Sigmoid colon (tissue), 7 donors: ENCODE measurements at regions of chr16 and their contacts with region 1.

Region 1: DNA sequence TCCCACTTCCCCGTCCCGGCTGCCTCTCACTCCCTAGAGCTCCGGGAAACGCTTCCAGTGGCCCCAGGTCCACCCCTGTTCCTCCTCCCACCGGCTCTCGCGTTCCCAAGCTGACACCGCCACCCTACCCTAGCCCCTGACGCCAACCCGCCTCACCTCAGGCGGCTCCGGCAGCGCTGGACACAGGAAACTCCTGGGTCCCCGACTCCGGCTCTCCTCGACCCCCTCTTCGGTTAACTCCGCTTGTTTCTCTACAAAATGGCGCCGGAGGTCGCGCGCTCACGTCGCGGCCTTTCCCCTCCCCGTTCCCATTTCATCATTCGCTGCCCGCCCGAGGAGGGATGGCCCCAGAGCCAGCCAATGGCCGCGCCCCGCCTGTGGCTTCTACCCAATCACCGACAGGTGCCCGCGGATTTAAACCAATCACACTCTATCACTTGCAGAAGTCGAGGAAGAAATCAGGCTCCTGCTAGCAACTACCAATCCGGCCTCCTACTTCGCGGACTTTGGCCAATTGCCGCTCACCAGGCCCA is at the start of gene CNOT1:
- DNase-seq: peak; percentile 99
- H3K4me3 ChIP-seq: peak within 1 kb of the TSS; percentile 86 to 99 (median 96)
- H3K27ac ChIP-seq: peak within 1 kb of the TSS; percentile 97 to 100 (median 98)
- H3K4me1 ChIP-seq: peaks cover 0 to 25% (median 23%) of the 10 kb centered on the region in 4 donors
- H3K27me3 ChIP-seq: no peaks in the 10 kb centered on the region
- CTCF ChIP-seq: no peak
- EP300 ChIP-seq: no peak
- POLR2A ChIP-seq: peak; percentile 76 to 81
- total RNA-seq, gene CNOT1: 70.1 to 112 (median 84.2) TPM

Region 2: DNA sequence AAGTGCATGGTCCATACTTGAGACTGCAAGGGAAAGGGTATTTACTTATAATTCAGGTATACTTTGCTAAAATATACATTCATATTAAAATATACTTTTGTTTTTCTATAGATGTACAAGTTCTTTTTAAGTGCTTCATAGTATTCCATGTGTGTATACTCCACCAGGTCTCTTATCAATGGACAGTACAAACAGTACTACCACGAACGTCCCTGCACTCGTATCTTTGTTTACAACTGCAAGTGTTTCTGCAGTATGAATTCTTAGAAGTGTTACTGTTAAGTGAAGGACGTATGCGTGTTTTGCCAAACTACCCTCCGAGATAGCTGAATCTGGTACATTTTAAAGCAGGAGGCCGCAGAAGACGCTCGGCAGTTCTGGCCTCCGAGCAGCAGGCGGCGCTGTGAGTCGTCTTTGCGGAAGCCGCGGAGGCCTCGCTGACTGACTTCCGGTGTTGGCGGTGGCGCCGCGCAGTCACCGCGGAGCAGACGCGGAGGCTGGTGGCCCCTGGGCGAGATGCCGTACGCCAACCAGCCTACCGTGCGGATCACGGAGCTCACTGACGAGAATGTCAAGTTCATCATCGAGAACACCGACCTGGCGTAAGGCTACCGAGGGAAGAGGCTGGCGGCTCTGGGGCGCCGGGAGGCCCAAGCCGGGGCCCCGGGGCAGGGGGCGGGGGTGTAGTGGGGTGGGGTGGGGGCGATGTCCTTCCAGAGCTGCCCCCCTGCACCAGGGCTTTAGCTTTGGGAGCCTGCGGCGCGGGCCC is 1167.2 kb before region 1 on chr16 and contains the start of gene POLR2C:
- intact Hi-C with region 1: loop called (anchors 10 kb)
- DNase-seq: peak; percentile 93
- H3K4me3 ChIP-seq: peak within 1 kb of the TSS; percentile 93 to 99 (median 98)
- H3K27ac ChIP-seq: peak within 1 kb of the TSS; percentile 87 to 92 (median 90)
- H3K4me1 ChIP-seq: peaks cover 0 to 25% (median 21%) of the 10 kb centered on the region in 4 donors
- H3K27me3 ChIP-seq: no peaks in the 10 kb centered on the region
- CTCF ChIP-seq: peak; percentile 86 to 95 (median 94)
- EP300 ChIP-seq: no peak
- POLR2A ChIP-seq: peak; percentile 88 to 94
- total RNA-seq, gene POLR2C: 60.7 to 141 (median 101) TPM

Region 3: GRCh38 chr16:58212824-58213655 is 416.6 kb before region 1 on chr16:
- intact Hi-C with region 1: no loop called
- DNase-seq: no peak
- H3K4me3 ChIP-seq: no peak overlapping the region
- H3K27ac ChIP-seq: no peak overlapping the region
- H3K4me1 ChIP-seq: no peaks in the 10 kb centered on the region
- H3K27me3 ChIP-seq: no peaks in the 10 kb centered on the region
- CTCF ChIP-seq: no peak
- EP300 ChIP-seq: no peak
- POLR2A ChIP-seq: no peak

Region 4: DNA sequence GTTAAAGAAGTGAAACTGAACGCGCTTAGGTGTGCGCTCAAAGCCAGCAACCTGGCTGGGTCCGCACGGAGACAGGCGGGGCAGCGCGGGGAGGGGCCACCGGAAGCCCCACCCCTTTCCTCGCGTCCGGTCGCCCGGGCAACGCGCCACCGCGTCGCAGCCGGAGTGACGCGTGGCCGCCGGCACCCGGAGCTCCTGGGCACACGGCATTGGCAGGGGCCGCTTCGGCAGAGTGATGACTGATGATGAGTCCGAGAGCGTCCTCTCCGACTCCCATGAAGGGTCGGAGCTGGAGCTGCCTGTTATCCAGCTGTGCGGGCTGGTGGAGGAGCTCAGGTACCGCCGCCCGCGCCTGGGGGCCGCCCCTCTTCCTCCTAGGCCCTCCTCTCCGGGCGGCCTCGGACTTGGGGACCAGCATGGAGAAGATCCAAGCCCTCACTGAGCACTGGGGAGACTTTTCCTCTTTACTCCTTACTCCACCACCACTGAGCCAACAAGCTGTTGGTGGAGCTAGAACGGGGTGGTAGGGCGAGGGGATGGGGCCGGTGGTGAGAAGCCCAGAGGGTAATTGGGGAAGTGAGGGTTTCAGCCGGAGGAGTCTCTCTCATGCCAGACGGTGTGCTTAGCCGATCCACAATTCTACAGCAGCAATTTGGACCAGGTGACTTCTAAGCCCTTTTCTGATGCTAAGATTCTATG is 379.7 kb before region 1 on chr16:
- intact Hi-C with region 1: loop called (anchors 5 kb)
- DNase-seq: peak; percentile 82
- H3K4me3 ChIP-seq: peak overlapping the region; percentile 46 to 70 (median 58)
- H3K27ac ChIP-seq: peak overlapping the region; percentile 39 to 67 (median 62)
- H3K4me1 ChIP-seq: peaks cover 0 to 16% (median 6%) of the 10 kb centered on the region in 4 donors
- H3K27me3 ChIP-seq: no peaks in the 10 kb centered on the region
- CTCF ChIP-seq: no peak
- EP300 ChIP-seq: no peak
- POLR2A ChIP-seq: no peak

Region 5: DNA sequence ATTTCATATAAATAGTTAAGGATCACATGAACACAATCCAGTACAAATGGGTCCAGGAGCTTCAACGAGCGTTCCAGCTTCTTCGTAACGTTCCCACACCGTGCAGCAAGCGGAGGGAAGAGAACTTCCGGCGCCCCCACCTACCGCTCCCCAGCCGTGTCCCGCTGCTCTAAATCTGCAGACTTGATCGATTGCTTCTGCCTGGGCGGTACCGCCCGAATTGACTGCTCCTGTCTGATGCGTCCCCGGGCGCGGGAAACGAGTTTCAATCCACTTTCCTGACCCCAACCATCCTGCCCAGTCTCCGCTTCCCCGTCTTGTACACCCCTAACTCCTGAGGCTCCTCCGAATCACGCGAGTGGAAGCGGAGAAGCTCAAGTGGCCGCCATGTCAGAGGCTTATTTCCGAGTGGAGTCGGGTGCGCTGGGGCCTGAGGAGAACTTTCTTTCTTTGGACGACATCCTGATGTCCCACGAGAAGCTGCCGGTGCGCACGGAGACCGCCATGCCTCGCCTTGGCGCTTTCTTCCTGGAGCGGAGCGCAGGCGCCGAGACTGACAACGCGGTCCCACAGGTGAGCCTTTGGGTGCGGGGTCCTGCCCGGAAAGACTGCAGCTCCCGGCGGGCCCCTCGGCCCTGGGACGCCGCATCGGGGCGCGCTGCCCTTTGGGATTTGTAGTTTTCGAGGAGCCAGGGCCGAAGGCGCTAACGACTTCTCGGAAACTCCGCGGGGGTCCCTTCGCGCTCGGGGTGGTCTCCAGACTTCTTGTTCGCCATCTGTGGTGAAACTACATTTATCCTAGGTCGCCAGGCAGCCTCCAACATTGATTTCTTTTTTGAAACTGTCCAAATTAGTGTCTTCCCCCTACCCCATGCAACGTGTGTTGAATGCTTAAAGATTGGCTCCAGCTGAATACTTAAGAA is 237.2 kb before region 1 on chr16 and contains the start of gene GINS3:
- intact Hi-C with region 1: loop called (anchors 2 kb)
- DNase-seq: peak; percentile 92
- H3K4me3 ChIP-seq: peak within 1 kb of the TSS; percentile 72 to 96 (median 82)
- H3K27ac ChIP-seq: peak within 1 kb of the TSS; percentile 81 to 87 (median 84)
- H3K4me1 ChIP-seq: peaks cover 0 to 7% (median 2%) of the 10 kb centered on the region in 4 donors
- H3K27me3 ChIP-seq: no peaks in the 10 kb centered on the region
- CTCF ChIP-seq: no peak
- EP300 ChIP-seq: no peak
- POLR2A ChIP-seq: no peak
- total RNA-seq, gene GINS3: 1.1 to 2.5 (median 2.4) TPM

Region 6: GRCh38 chr16:58515125-58515870 is 114.3 kb before region 1 on chr16 and contains the start of gene SETD6:
- intact Hi-C with region 1: loop called (anchors 10 kb)
- DNase-seq: peak; percentile 95
- H3K4me3 ChIP-seq: peak within 1 kb of the TSS; percentile 84 to 92 (median 86)
- H3K27ac ChIP-seq: peak within 1 kb of the TSS; percentile 78 to 88 (median 82)
- H3K4me1 ChIP-seq: peaks cover 0 to 28% (median 19%) of the 10 kb centered on the region in 4 donors
- H3K27me3 ChIP-seq: no peaks in the 10 kb centered on the region
- CTCF ChIP-seq: peak in 1 of 4 experiments; percentile 49
- EP300 ChIP-seq: no peak
- POLR2A ChIP-seq: no peak
- total RNA-seq, gene SETD6: 15.5 to 23.5 (median 19.9) TPM

Region 7: GRCh38 chr16:58684354-58685083 is 54.9 kb after region 1 on chr16 and contains the start of gene SLC38A7:
- intact Hi-C with region 1: loop called (anchors 2 kb)
- DNase-seq: peak; percentile 94
- H3K4me3 ChIP-seq: peak within 1 kb of the TSS; percentile 70 to 95 (median 74)
- H3K27ac ChIP-seq: peak within 1 kb of the TSS; percentile 70 to 80 (median 76)
- H3K4me1 ChIP-seq: peaks cover 0 to 22% (median 18%) of the 10 kb centered on the region in 4 donors
- H3K27me3 ChIP-seq: no peaks in the 10 kb centered on the region
- CTCF ChIP-seq: no peak
- EP300 ChIP-seq: no peak
- POLR2A ChIP-seq: no peak
- total RNA-seq, gene SLC38A7: 9.5 to 17.4 (median 12.1) TPM

Region 8: GRCh38 chr16:58733671-58734458 is 104.2 kb after region 1 on chr16 and contains the start of gene GOT2:
- intact Hi-C with region 1: loop called (anchors 5 kb)
- DNase-seq: peak; percentile 88
- H3K4me3 ChIP-seq: peak within 1 kb of the TSS; percentile 74 to 95 (median 82)
- H3K27ac ChIP-seq: peak within 1 kb of the TSS; percentile 84 to 89 (median 86)
- H3K4me1 ChIP-seq: peaks cover 5 to 25% (median 18%) of the 10 kb centered on the region in 4 donors
- H3K27me3 ChIP-seq: no peaks in the 10 kb centered on the region
- CTCF ChIP-seq: peak; percentile 53 to 88 (median 71)
- EP300 ChIP-seq: no peak
- POLR2A ChIP-seq: peak in 1 of 2 donors; percentile 21
- total RNA-seq, gene GOT2: 33.7 to 52.1 (median 44.4) TPM